Psoas muscle (tissue), 8 donors: ENCODE measurements at regions of chr4 and their contacts with region 1.

Region 1: DNA sequence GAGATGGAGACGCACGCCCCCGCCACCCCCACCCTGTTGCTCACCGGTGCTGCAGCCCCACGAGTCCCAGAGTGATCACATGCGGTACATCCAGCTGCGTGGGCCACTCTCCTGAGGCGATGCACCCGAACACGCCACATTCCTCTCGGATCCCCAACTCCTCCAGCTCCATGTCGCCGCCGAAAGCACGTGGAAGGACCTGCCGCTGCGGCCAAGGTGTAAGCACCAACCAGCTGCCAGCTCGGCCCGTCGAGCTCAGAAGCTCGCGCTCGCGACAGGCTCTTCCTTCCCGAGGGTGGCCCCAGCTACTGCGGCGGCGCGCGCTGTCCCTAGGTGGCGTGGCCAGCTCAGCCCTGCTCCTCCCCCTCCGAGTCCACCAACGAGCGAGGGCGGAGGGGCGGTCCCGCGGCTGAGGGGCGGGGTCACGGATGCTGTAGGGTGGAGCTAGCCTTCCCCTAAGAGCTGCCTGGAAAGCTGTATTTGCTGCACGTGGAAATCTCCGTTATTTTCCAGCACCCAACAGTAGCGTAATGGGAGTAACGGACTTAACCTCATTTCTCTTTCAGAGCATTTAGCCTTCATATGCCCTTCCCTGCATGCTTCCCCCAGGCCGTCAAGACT is at the start of gene PPAT:
- DNase-seq: peak; percentile 98 to 99
- ATAC-seq: peak; percentile 95 to 97 (median 96)
- H3K4me3 ChIP-seq: peak within 1 kb of the TSS; percentile 85
- H3K27ac ChIP-seq: peak within 1 kb of the TSS; percentile 97
- H3K4me1 ChIP-seq: peaks cover 12% of the 10 kb centered on the region
- H3K27me3 ChIP-seq: no peaks in the 10 kb centered on the region
- CTCF ChIP-seq: peak; percentile 26
- total RNA-seq, gene PPAT: 5.0 to 8.1 (median 6.6) TPM

Region 2: DNA sequence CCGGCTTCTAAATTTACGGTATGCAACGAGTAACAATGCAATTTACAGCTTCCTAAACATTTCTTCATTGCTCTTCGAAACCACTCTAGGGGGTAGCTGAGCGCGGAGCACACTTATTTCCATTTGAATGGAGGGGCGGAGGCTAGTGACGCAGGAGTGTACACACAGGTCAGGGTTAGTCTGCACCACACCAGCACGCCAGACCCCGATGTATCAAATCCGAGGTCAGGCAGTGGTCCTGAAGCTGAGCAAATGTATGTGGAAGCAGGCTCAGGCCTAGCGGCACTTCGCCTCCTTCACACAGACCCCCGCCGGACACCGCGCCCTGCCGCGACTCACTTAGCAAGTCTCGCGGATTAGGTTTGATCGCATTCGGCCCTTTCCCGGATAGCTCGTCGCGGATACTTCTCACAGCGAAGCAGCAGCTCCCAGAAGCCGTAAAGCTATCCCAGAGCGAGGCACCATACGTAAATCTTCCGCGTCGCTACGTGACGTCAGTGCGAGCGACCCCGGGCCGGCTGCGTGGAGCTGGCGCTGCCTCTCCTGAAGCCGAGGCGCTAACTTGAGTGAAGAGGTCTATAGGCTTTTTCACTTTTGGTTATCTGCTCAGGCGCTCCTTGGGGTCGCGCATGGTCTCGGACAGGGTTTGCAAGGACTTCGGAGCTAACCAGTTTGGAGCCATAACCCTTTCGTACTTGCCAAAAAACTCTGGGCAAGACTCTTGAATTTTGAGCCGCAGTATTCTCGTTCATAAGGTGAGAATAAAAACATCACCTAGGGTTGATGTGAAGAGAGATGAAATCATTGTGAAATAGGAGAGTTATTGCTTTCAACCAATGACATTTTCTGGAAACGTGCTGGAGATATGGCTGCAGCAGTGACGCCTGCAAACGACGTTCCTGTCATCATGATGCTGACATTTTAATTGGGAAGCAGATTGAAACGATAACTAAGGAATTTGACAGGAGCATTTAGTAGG is 48.1 kb before region 1 on chr4 and contains the start of gene AASDH:
- intact Hi-C with region 1: loop called in 1 of 2 experiments (anchors 5 kb)
- DNase-seq: peak; percentile 91 to 95
- ATAC-seq: peak; percentile 96 to 98 (median 97)
- H3K4me3 ChIP-seq: peak within 1 kb of the TSS; percentile 76
- H3K27ac ChIP-seq: peak within 1 kb of the TSS; percentile 92
- H3K4me1 ChIP-seq: peaks cover 22% of the 10 kb centered on the region
- H3K27me3 ChIP-seq: no peaks in the 10 kb centered on the region
- CTCF ChIP-seq: no peak
- total RNA-seq, gene AASDH: 4.5 to 6.9 (median 5.9) TPM

Region 3: GRCh38 chr4:56463711-56464110 is 28.3 kb after region 1 on chr4:
- intact Hi-C with region 1: loop called in 1 of 2 experiments (anchors 2 kb)
- DNase-seq: no peak
- ATAC-seq: no peak
- H3K4me3 ChIP-seq: no peak overlapping the region
- H3K27ac ChIP-seq: no peak overlapping the region
- H3K4me1 ChIP-seq: peaks cover 28% of the 10 kb centered on the region
- H3K27me3 ChIP-seq: no peaks in the 10 kb centered on the region
- CTCF ChIP-seq: no peak

Region 4: GRCh38 chr4:56544573-56545131 is 109.2 kb after region 1 on chr4:
- intact Hi-C with region 1: loop called in 1 of 2 experiments (anchors 5 kb)
- DNase-seq: peak; percentile 84 to 89
- ATAC-seq: peak; percentile 99 to 100 (median 100)
- H3K4me3 ChIP-seq: peak overlapping the region; percentile 59
- H3K27ac ChIP-seq: no peak overlapping the region
- H3K4me1 ChIP-seq: peaks cover 3% of the 10 kb centered on the region
- H3K27me3 ChIP-seq: no peaks in the 10 kb centered on the region
- CTCF ChIP-seq: peak; percentile 98

Region 5: GRCh38 chr4:56907489-56908205 is 472.2 kb after region 1 on chr4 and contains the start of gene REST:
- intact Hi-C with region 1: loop called in 1 of 2 experiments (anchors 5 kb)
- DNase-seq: peak; percentile 81 to 85
- ATAC-seq: peak; percentile 82 to 84 (median 82)
- H3K4me3 ChIP-seq: peak within 1 kb of the TSS; percentile 96
- H3K27ac ChIP-seq: peak within 1 kb of the TSS; percentile 91
- H3K4me1 ChIP-seq: peaks cover 26% of the 10 kb centered on the region
- H3K27me3 ChIP-seq: no peaks in the 10 kb centered on the region
- CTCF ChIP-seq: no peak
- total RNA-seq, gene REST: 13.5 to 21.4 (median 20.0) TPM